ENCODE measurements at regions of chr6 and their contacts with region 1.

Region 1: DNA sequence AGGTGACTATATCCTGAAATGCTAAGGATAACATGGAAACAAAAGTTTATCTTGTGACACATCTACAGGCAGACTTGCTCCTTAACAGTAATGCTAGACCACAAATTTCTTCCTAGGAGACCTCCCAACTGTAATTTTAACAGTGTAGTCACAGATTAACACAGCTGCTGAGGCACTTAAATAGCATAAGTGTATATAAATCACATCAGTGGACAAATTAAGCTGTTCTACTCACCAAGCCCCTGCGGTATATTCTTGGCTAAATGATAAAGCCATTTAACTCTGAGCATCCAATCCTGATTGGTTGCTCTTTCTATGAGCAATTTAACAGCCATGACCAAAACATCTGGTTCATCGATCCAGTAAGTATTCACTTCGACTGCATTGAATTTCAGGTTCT is 73.3 kb upstream of the LYRM2 start:
- DNase-seq: no peak
- ATAC-seq: no peak
- H3K4me3 ChIP-seq: no peak overlapping the region
- H3K27ac ChIP-seq: no peak overlapping the region
- H3K4me1 ChIP-seq: no peaks in the 10 kb centered on the region
- H3K27me3 ChIP-seq: no peaks in the 10 kb centered on the region
- CTCF ChIP-seq: no peak

Region 2: DNA sequence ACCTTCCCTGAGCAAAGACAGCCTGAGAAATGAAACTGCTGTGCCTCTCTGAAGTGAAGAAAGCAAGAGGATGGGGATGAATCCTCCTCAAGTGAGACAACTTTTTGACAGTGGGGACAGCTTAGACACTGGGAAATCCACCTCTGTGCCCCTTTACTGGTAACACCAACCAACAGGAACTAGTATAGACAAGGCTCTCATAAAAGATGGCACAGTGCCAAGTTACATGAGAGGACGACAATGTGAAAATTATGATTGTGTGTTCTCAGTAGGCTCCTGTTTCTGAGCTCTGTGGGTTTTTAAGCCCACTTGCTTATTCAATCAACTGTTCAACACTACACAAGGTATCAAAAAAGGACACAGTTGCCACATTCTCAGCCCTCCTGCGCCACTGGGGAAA is 31.7 kb before region 1 on chr6:
- intact Hi-C with region 1: no loop called
- DNase-seq: no peak
- ATAC-seq: peak in 2 of 4 donors; percentile 25 to 26
- H3K4me3 ChIP-seq: no peak overlapping the region
- H3K27ac ChIP-seq: peak overlapping the region; percentile 60
- H3K4me1 ChIP-seq: peaks cover 19% of the 10 kb centered on the region
- H3K27me3 ChIP-seq: no peaks in the 10 kb centered on the region
- CTCF ChIP-seq: no peak

Region 3: GRCh38 chr6:89745716-89746115 is 33.9 kb after region 1 on chr6:
- intact Hi-C with region 1: loop called in 1 of 2 experiments (anchors 5 kb)
- DNase-seq: no peak
- ATAC-seq: no peak
- H3K4me3 ChIP-seq: no peak overlapping the region
- H3K27ac ChIP-seq: no peak overlapping the region
- H3K4me1 ChIP-seq: no peaks in the 10 kb centered on the region
- H3K27me3 ChIP-seq: no peaks in the 10 kb centered on the region
- CTCF ChIP-seq: no peak

Region 4: GRCh38 chr6:89763550-89763949 is 51.7 kb after region 1 on chr6:
- intact Hi-C with region 1: loop called in 1 of 2 experiments (anchors 5 kb)
- DNase-seq: no peak
- ATAC-seq: no peak
- H3K4me3 ChIP-seq: no peak overlapping the region
- H3K27ac ChIP-seq: no peak overlapping the region
- H3K4me1 ChIP-seq: no peaks in the 10 kb centered on the region
- H3K27me3 ChIP-seq: no peaks in the 10 kb centered on the region
- CTCF ChIP-seq: no peak

Region 5: GRCh38 chr6:89787660-89788328 is 76.0 kb after region 1 on chr6:
- intact Hi-C with region 1: loop called (anchors 2 to 10 kb)
- DNase-seq: no peak
- ATAC-seq: no peak
- H3K4me3 ChIP-seq: no peak overlapping the region
- H3K27ac ChIP-seq: no peak overlapping the region
- H3K4me1 ChIP-seq: no peaks in the 10 kb centered on the region
- H3K27me3 ChIP-seq: no peaks in the 10 kb centered on the region
- CTCF ChIP-seq: no peak